Activated T-helper 1 cell treated with anti-CD3 and anti-CD28 coated beads, Interleukin-12 subunit alpha, Interleukin-12 subunit beta, Interleukin-2, Interleukin-4 antibody, amounts not matched to agents 30 ng/mL and 10 ng/mL and 1 ng/mL, durations not matched to agents 14 hours and 24 hours and 36 hours (primary cell): ENCODE measurements at regions of chr1 and their contacts with region 1.

Region 1: GRCh38 chr1:198681831-198682759 is 43.3 kb downstream of the PTPRC start:
- DNase-seq: peak; percentile 86
- H3K4me3 Mint-ChIP-seq: peak overlapping the region; percentile 78
- H3K27ac Mint-ChIP-seq: peak overlapping the region; percentile 91
- H3K4me1 Mint-ChIP-seq: peaks cover 80% of the 10 kb centered on the region
- H3K27me3 Mint-ChIP-seq: no peaks in the 10 kb centered on the region

Region 2: GRCh38 chr1:197902454-197903195 is 779.5 kb before region 1 on chr1 and contains the start of gene C1orf53:
- intact Hi-C with region 1: loop called (anchors 10 kb)
- DNase-seq: peak; percentile 78
- H3K4me3 Mint-ChIP-seq: peak within 1 kb of the TSS; percentile 91
- H3K27ac Mint-ChIP-seq: peak within 1 kb of the TSS; percentile 93
- H3K4me1 Mint-ChIP-seq: peaks cover 17% of the 10 kb centered on the region
- H3K27me3 Mint-ChIP-seq: peaks cover 55% of the 10 kb centered on the region
- total RNA-seq, gene C1orf53: 0.81 and 1.3 TPM in 2 replicates

Region 3: GRCh38 chr1:198359024-198359653 is 323.0 kb before region 1 on chr1:
- intact Hi-C with region 1: loop called (anchors 5 kb)
- DNase-seq: no peak
- H3K4me3 Mint-ChIP-seq: no peak overlapping the region
- H3K27ac Mint-ChIP-seq: no peak overlapping the region
- H3K4me1 Mint-ChIP-seq: no peaks in the 10 kb centered on the region
- H3K27me3 Mint-ChIP-seq: no peaks in the 10 kb centered on the region

Region 4: GRCh38 chr1:198612471-198613260 is 69.4 kb before region 1 on chr1:
- intact Hi-C with region 1: no loop called
- DNase-seq: no peak
- H3K4me3 Mint-ChIP-seq: peak overlapping the region; percentile 78
- H3K27ac Mint-ChIP-seq: peak overlapping the region; percentile 88
- H3K4me1 Mint-ChIP-seq: peaks cover 67% of the 10 kb centered on the region
- H3K27me3 Mint-ChIP-seq: no peaks in the 10 kb centered on the region

Region 5: DNA sequence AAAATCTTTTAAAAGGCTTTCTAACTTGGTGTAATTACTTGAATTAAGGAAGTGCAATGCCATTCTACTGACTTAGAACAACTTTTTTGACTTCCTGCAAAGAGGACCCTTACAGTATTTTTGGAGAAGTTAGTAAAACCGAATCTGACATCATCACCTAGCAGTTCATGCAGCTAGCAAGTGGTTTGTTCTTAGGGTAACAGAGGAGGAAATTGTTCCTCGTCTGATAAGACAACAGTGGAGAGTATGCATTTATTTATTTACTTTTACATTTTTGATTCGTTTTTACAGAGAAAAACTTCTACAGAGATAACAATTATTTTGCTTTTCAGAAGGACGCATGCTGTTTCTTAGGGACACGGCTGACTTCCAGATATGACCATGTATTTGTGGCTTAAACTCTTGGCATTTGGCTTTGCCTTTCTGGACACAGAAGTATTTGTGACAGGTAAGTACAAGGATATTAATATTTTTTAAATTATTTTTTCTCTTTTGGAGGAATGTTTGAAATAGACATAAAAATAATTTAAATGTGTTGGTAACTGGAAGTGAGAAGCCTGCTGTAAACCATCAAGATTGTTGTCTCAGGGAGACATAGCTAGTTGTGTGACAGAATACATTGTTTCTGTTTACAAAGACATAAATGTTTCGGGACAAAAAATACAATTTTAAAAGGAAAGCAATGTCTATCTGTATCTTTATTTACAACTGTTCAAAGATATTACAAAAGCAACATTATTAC is 43.0 kb before region 1 on chr1 and contains the start of gene PTPRC:
- intact Hi-C with region 1: loop called (anchors 1 kb)
- DNase-seq: no peak
- H3K4me3 Mint-ChIP-seq: peak within 1 kb of the TSS; percentile 92
- H3K27ac Mint-ChIP-seq: peak within 1 kb of the TSS; percentile 96
- H3K4me1 Mint-ChIP-seq: peaks cover 54% of the 10 kb centered on the region
- H3K27me3 Mint-ChIP-seq: no peaks in the 10 kb centered on the region
- total RNA-seq, gene PTPRC: 512 and 516 TPM in 2 replicates

Region 6: DNA sequence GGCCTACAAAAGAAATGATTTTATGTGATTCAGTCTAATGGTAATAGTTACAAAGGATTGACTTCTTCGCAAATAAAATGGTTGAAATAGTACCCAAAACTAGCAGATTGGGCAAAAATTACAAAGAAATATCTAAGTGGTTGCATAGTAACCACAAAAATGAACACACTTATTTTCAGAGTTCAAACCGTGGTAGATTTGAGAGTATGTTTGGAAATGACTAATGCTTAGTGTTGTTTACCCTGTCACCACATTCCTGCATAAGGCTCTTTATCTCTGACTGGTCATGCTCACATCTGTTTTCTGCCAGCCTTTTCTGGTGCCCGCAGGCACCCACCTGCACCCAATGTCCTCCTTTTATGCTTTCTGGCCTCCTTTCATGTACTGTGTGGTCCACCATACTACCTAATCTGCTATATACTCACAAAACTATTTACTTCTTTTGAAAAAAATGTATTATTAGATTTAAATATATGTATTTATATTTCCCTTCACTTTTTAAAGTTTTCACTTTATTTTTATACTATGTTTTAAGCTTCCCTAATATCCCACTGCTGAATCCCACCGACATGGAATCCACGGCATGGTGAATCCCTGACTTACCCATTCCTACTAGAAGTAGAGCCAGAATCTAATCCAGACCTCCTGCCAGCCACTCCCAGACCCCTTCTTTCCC is 12.9 kb before region 1 on chr1:
- intact Hi-C with region 1: loop called (anchors 1 kb)
- DNase-seq: no peak
- H3K4me3 Mint-ChIP-seq: peak overlapping the region; percentile 63
- H3K27ac Mint-ChIP-seq: peak overlapping the region; percentile 93
- H3K4me1 Mint-ChIP-seq: peaks cover 92% of the 10 kb centered on the region
- H3K27me3 Mint-ChIP-seq: no peaks in the 10 kb centered on the region

Region 7: DNA sequence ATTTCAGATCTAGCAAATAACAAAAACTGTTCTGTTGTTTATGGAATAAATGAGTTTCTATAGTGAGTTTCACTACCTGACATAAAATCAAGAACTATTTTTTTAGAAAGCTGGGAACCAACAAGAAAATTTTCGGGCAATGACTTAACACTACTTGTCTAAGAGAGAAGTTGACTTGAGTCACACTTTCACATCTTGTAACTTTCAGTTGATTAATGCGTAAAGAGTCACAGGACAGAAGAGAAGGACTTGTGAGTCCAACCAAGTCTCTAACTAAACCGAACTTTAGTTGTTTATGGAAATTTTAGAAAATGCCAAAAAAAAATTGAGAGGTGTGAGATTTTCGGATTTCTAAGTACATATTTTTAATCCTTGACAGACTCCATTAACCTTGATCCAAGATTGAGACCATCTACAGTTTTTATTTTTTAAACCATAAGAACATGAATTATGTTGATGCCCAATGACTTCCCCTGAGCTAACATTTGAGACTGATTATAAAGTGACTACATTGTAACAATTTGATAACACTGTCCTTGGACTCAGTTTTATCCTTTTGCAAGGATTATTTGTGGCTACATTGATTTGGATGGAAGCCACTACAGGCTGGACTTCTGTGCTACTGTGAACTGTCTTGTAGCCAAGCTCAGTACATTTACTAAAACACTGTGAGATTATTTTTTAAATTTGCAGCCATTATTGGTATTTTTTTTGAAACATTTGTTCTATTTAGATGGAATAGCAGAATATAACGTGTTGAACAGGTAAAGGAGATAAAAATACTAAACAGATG is 240.7 kb after region 1 on chr1:
- intact Hi-C with region 1: loop called (anchors 5 kb)
- DNase-seq: no peak
- H3K4me3 Mint-ChIP-seq: peak overlapping the region; percentile 78
- H3K27ac Mint-ChIP-seq: peak overlapping the region; percentile 90
- H3K4me1 Mint-ChIP-seq: peaks cover 90% of the 10 kb centered on the region
- H3K27me3 Mint-ChIP-seq: no peaks in the 10 kb centered on the region